Esophagus muscularis mucosa (tissue), 4 donors: ENCODE measurements at regions of chrX and their contacts with region 1.

Region 1: DNA sequence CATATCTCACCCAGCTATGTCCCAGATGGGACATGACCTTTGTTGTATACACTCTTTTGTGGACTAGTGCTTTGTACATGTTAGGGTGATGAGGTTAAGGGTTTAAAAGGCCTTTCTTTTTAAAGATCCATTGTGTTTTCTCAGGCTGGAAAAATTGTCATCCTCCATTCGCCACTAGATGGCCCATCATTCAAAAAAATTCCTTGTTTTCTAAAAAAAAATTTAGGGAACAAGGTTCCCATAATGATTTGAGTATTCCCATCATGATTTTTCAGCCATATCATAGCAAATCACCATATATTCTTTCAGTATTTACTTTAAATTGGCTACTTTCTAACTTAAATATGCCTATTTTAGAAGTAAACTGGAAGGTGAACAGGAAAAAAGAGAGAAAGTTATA is 91.9 kb upstream of the TMEM164 start:
- DNase-seq: no peak
- H3K4me3 ChIP-seq: no peak overlapping the region
- H3K27ac ChIP-seq: no peak overlapping the region
- H3K4me1 ChIP-seq: no peaks in the 10 kb centered on the region
- H3K27me3 ChIP-seq: no peaks in the 10 kb centered on the region
- CTCF ChIP-seq: peak in 2 of 3 experiments; percentile 41 to 44
- EP300 ChIP-seq: no peak
- POLR2A ChIP-seq: no peak

Region 2: DNA sequence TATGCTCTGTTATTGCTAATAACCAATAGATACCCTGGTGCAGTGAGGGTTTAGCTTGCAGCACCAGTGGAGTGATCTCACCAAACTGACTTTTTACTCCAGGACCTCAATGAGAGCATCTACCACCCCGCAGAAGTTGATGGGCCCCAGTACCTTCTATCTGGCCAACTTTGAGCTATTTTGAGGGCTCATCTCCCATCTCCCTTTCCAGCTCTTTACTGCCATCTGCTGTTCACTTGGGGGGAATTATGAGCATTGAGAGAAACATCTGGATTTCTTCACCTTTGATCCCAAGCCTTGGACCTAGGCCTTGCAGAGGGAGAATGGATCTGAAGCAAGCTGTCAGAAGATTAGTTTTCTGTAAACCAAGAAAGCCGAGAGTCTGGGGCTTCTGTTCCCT is 235.5 kb after region 1 on chrX:
- intact Hi-C with region 1: loop called (anchors 10 kb)
- DNase-seq: no peak
- H3K4me3 ChIP-seq: no peak overlapping the region
- H3K27ac ChIP-seq: no peak overlapping the region
- H3K4me1 ChIP-seq: peaks cover 7 to 16% (median 11%) of the 10 kb centered on the region in 4 donors
- H3K27me3 ChIP-seq: no peaks in the 10 kb centered on the region
- CTCF ChIP-seq: peak; percentile 58 to 66 (median 64)
- EP300 ChIP-seq: no peak
- POLR2A ChIP-seq: no peak